ENCODE measurements at regions of chr2 and their contacts with region 1.

Region 1: DNA sequence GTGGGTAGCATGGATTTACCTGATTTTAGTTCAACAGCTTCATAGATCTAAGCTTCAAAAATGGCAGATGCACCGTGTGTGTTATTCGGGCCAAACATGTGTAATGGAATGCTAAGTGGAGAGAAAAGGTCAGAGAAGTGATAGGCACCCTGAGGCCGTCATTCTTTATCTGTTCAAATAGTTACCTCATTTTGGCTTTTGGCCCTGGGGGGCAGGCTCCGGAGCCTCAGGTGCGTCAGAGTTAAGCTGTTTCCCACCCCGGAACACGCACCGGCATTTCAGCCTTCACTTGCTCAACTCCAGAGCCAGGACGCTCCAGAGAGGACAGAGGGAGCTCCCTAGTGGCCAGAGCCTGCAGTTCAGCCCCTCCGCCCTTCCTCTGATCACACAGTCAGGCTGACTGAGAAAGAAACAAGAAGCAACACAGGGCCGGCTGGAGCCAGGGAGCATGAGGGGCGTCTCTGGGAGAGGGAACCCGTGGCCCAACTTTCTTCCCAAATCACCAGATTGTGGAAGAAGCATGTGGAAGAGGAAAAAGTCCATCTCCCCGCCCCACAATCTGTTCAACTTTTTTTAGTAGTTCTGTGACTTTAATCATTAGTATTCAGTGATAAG is 135.2 kb upstream of the EPC2 start:
- DNase-seq: peak; percentile 95
- ATAC-seq: peak; percentile 100
- H3K4me3 Mint-ChIP-seq: peak overlapping the region; percentile 66
- H3K27ac Mint-ChIP-seq: peak overlapping the region; percentile 79
- H3K4me1 Mint-ChIP-seq: peaks cover 23% of the 10 kb centered on the region
- H3K27me3 Mint-ChIP-seq: no peaks in the 10 kb centered on the region
- CTCF ChIP-seq: peak; percentile 91

Region 2: GRCh38 chr2:147937744-147938349 is 571.5 kb before region 1 on chr2:
- CTCF ChIA-PET with region 1: interaction called, 20 read pairs
- POLR2A ChIA-PET with region 1: no interaction called
- intact Hi-C with region 1: loop called (anchors 5 kb)
- DNase-seq: no peak
- ATAC-seq: peak; percentile 47
- H3K4me3 Mint-ChIP-seq: no peak overlapping the region
- H3K27ac Mint-ChIP-seq: no peak overlapping the region
- H3K4me1 Mint-ChIP-seq: no peaks in the 10 kb centered on the region
- H3K27me3 Mint-ChIP-seq: no peaks in the 10 kb centered on the region
- CTCF ChIP-seq: peak; percentile 97

Region 3: DNA sequence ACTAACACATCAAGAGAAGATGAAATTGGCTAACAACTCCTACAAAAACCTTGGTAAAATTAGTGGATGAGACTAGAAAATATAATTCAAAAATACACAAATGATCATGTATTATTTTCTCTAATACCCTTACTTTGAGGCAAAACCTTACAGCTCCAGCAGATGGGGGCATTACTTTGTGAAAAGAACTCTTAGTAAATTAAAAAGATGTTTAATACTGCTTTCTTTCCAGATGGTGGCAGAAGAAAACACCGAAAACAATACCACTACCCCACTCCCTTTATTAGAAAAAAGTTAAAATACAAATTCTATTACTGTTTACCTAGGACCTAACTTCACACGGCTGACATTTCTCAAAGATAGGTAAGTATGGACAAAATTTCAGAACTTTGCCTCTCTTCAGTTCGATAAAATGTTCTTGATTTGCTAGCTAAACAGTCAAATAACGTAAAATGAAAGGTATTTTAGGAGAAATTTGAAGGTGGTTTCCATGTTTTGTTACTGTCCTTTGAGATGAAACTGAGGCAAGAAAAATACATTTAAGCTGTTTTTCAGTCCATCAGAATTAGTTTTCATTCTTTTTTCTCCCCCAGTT is 519.5 kb before region 1 on chr2:
- CTCF ChIA-PET with region 1: interaction called, 40 read pairs
- POLR2A ChIA-PET with region 1: interaction called, 3 read pairs
- intact Hi-C with region 1: loop called (anchors 2 kb)
- DNase-seq: peak; percentile 47
- ATAC-seq: peak; percentile 64
- H3K4me3 Mint-ChIP-seq: no peak overlapping the region
- H3K27ac Mint-ChIP-seq: no peak overlapping the region
- H3K4me1 Mint-ChIP-seq: peaks cover 14% of the 10 kb centered on the region
- H3K27me3 Mint-ChIP-seq: no peaks in the 10 kb centered on the region
- CTCF ChIP-seq: peak; percentile 89

Region 4: GRCh38 chr2:148493822-148494563 is 15.4 kb before region 1 on chr2:
- CTCF ChIA-PET with region 1: interaction called, 10 read pairs
- POLR2A ChIA-PET with region 1: interaction called, 3 read pairs
- intact Hi-C with region 1: no loop called
- DNase-seq: no peak
- ATAC-seq: no peak
- H3K4me3 Mint-ChIP-seq: no peak overlapping the region
- H3K27ac Mint-ChIP-seq: no peak overlapping the region
- H3K4me1 Mint-ChIP-seq: peaks cover 10% of the 10 kb centered on the region
- H3K27me3 Mint-ChIP-seq: no peaks in the 10 kb centered on the region
- CTCF ChIP-seq: no peak

Region 5: GRCh38 chr2:148552675-148553331 is 43.4 kb after region 1 on chr2:
- CTCF ChIA-PET with region 1: interaction called, 15 read pairs
- POLR2A ChIA-PET with region 1: interaction called, 3 read pairs
- intact Hi-C with region 1: no loop called
- DNase-seq: peak; percentile 51
- ATAC-seq: peak; percentile 86
- H3K4me3 Mint-ChIP-seq: no peak overlapping the region
- H3K27ac Mint-ChIP-seq: no peak overlapping the region
- H3K4me1 Mint-ChIP-seq: peaks cover 5% of the 10 kb centered on the region
- H3K27me3 Mint-ChIP-seq: no peaks in the 10 kb centered on the region
- CTCF ChIP-seq: no peak

Measured in activated CD8-positive, alpha-beta T cell treated with anti-CD3 and anti-CD28 coated beads for 36 hours (primary cell).